BJ (cell line): ENCODE measurements at regions of chr13 and their contacts with region 1.

Region 1: DNA sequence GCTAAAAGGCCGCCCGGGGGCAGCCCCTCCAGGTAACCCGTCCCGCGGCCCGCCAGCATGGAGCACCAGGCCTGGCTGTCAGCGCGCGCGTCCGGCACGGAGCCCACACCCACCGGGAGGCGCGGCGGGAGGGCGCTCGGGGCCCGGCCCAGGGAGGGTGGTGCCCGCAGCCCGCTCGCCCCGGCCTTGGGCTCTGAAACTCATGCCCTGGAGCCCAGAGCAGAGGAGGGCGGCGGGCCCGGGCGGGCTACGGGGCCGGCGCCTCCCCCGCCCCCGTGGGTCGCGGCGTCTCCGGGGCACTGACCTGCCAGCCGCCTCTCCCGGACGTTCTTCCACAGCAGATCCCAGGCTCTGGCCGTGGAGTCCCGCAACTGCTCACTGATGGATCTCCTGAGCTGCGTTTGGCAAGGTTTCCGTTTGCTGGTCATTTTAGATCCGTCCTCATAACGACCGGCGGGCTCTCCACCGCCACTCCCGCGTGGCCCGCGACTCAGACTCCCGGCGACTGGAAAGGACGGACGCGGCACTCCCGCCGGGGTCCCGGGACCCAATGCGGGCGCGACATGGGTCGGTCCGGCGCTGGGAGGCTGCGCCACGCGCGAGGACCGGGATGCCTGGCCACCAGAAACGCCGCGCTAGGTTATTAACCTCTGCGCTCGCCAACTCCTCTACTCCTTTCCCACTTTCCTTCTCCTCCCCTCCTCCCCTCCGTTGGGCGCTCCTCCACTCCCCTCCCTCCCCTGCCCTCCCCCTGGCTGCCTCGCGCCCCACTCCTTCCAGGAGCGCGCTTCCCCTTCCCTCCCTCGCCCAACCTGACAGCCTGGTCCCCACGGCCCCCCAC is 64.7 kb upstream of the STARD13 start:
- DNase-seq: no peak
- H3K4me3 ChIP-seq: peak overlapping the region; percentile 82
- H3K27me3 ChIP-seq: peaks cover 3% of the 10 kb centered on the region; the same call in 1 of the 2 replicates
- CTCF ChIP-seq: no peak

Region 2: DNA sequence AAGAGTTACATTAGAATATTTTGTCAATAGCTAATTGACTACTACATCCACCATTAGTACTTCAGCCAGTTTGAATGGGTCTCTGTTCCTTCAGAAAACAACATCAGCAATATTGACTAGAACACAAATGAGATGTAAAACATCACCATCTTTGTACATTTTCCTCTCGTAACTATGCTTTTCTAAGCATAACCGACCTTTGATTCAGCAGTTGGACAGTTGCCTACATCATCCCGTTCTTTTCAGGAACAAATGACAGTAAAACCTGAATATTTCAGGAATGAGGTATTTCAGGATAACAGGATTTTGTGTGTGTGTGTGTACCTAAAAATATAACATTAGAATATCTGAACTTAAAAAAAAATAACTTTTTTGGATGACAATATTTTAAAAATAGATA is 125.5 kb before region 1 on chr13:
- CTCF ChIA-PET with region 1: no interaction called
- POLR2A ChIA-PET with region 1: interaction called, 12 read pairs
- DNase-seq: no peak
- H3K4me3 ChIP-seq: no peak overlapping the region
- H3K27me3 ChIP-seq: no peaks in the 10 kb centered on the region
- CTCF ChIP-seq: no peak

Region 3: DNA sequence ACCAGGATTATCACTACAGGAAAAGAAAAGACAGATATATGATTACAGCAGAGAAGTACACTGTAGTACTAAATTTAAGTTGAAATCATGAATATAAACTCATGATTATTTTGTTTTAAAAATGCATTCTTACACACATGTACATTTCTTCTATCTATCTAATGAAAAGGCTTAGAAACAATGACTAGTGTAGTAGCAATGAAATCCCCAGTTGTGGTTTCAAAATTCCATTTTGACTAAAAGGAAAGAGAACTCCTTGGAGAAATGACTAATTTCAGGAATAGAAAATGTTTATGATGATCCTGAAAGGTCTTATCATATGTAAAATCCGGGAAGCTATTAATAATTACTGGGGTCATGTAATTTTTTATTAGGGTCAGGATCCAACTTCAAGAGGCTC is 130.4 kb after region 1 on chr13:
- CTCF ChIA-PET with region 1: no interaction called
- POLR2A ChIA-PET with region 1: no interaction called
- DNase-seq: no peak
- H3K4me3 ChIP-seq: no peak overlapping the region
- H3K27me3 ChIP-seq: no peaks in the 10 kb centered on the region
- CTCF ChIP-seq: no peak